Posterior vena cava (tissue), 2 donors: ENCODE measurements at regions of chr15 and their contacts with region 1.

Region 1: DNA sequence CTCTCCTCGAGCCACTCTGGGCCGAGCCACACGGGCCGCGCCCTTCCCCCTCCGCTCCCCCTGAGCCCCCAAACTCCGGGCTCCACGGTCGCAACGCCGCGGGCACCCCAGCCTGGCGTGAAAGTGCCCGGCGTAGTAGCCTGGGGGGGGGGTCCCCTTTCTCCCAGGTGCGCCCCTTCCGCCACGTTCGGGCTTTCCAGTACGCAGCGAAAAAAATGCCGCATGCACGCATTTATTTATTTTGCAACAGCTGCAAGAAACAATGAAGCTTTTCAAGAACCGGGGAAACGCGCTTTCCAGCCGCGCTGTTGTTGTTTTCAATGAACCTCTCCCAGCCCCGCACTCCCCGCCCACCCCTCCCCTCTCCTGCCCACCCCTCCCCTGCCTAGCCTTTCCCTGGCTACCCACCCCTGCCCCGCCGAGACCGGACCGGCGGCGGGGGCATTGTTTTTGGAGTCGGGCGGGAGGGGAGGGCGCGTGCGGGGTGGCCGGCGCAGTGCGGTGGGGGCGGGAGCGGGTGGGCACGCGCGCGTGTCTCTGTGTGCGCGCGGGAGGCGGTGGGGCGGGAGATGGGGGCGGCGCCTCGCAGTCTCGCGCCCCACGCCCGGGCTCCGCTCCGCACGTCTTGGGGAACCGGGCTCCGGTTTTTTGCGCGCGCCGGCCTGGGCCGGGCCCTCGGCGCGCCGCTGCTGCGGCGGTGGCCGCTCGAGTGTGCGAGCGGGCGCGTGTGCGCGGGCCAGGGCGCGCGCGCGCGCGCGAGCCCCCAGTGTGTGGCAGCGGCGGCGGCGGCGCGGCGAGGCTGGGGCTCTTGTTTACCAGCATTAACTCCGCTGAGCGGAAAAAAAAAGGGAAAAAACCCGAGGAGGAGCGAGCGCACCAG is at the start of gene IGF1R:
- DNase-seq: peak; percentile 96
- total RNA-seq, gene IGF1R: 30.7 to 50.1 TPM

Region 2: GRCh38 chr15:98518823-98519561 is 129.0 kb before region 1 on chr15:
- intact Hi-C with region 1: loop called in 1 of 2 experiments (anchors 5 kb)
- DNase-seq: peak; percentile 72

Region 3: GRCh38 chr15:98586066-98586465 is 61.9 kb before region 1 on chr15:
- intact Hi-C with region 1: no loop called
- DNase-seq: no peak

Region 4: GRCh38 chr15:99068186-99068585 is 420.2 kb after region 1 on chr15:
- intact Hi-C with region 1: loop called in 1 of 2 experiments (anchors 10 kb)
- DNase-seq: no peak